Cardiac septum (tissue), 1 donor: ENCODE measurements at regions of chr12 and their contacts with region 1.

Region 1: GRCh38 chr12:106247674-106248311 is at the start of gene CKAP4:
- DNase-seq: peak; percentile 91
- total RNA-seq, gene CKAP4: 56.8 TPM

Region 2: DNA sequence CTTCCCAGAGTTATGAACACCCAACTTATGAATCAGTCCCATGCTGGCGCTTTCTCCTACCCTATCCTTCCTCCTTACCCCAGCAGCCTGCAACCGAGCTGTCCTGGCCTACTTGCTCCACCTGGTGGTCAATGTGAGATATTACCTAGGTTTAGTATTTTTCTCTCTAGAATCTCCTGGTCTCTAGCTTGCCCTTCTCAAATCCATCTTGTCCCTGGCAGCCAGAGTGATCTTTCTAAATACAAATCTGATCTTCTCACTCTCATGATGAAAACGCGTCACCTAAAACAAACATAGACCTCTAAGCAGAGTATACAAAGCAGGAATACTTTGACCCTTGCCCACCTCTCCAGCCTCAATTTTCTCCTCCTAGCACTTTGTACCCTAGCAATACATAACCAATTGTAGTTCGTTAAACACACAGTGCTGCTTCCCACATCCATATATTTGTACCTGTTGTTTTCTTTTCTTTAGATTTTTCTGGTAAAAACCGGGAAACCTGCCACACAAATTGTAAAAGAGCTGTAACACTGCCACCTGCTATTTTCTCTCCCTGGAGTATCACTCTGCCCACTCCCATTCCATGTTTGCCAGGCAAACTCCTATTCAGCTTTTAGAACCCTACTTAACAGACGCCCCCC is 34.8 kb after region 1 on chr12:
- intact Hi-C with region 1: loop called (anchors 5 kb)
- DNase-seq: peak; percentile 84

Region 3: DNA sequence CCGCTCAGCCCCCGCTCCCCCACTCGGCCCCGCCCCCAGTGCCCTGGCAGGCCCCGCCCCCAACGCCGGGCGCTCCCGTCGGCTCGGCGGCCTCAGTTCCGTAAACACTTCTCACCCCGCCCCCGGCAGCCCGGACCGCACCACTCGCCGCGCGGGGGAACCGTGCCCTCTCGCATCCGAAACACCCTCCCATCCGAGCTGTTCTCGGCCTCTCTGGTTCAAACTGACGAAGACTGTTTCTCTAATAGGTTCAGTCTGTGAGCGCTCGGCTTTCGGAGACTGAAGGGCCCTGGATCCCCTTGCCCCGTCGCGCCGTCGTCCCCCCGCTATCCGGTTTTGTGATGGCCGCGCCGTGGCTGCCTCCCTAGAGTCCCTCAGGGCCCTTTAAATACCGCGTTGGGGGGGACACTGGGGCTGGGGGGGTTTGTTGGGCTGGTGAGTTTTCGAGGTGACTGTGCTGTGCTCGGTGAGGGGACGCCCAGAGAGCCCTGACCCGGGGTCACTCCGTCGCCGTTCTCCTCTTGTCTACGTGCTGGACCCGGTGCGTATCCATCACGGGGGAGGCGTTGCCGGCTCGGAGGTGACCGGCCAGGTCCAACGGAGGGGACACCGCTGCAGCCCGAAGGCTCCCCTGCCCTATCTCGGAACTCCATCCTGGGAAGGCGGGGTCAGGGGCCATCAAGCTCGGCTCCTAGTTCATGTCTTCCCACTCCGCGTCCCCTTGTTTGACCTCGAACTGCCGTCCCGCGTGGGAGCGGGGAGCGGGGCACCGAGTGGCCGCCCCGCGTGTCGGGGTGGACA is 54.8 kb after region 1 on chr12 and contains the start of gene TCP11L2:
- intact Hi-C with region 1: loop called (anchors 1 kb)
- DNase-seq: peak; percentile 96
- total RNA-seq, gene TCP11L2: 61.2 TPM